CD8-positive, alpha-beta T cell (primary cell): ENCODE measurements at regions of chr3 and their contacts with region 1.

Region 1: DNA sequence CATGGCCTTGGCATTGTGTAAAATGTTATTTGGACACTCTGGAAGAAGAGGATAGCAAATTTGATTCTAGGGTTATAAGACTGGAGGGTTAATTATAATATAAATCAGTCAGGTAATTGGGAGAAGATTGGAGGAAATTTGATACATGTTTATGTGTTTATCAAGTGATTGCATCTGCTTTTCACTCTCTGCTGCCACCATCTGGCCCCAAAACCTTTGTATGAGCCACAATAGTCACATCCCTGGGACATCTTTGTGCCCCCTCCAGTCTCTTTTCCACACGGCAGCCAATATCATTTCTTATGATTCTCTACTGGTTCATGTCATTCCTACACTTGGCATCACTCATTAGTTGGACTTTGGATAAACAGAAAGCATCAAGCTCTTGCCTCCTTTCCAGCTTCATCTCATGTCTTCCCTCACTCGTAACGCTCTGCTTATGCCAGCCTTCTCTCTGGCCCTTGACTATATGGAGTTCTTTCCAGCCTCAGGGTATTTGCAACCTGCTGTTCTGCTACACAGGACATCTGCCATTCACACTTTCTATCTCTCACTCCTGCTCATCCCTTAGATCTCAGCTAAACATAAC is 602.3 kb upstream of the SUCLG2 start:
- DNase-seq: peak in 5 of 9 experiments; percentile 18 to 45 (median 28)
- ATAC-seq: no peak
- H3K4me3 ChIP-seq: no peak overlapping the region
- H3K4me3 Mint-ChIP-seq: no peak overlapping the region
- H3K27ac ChIP-seq: no peak overlapping the region
- H3K27ac Mint-ChIP-seq: no peak overlapping the region
- H3K4me1 ChIP-seq: no peaks in the 10 kb centered on the region
- H3K4me1 Mint-ChIP-seq: peaks cover 4% of the 10 kb centered on the region
- H3K27me3 ChIP-seq: no peaks in the 10 kb centered on the region
- H3K27me3 Mint-ChIP-seq: no peaks in the 10 kb centered on the region
- CTCF ChIP-seq: peak; percentile 34

Region 2: DNA sequence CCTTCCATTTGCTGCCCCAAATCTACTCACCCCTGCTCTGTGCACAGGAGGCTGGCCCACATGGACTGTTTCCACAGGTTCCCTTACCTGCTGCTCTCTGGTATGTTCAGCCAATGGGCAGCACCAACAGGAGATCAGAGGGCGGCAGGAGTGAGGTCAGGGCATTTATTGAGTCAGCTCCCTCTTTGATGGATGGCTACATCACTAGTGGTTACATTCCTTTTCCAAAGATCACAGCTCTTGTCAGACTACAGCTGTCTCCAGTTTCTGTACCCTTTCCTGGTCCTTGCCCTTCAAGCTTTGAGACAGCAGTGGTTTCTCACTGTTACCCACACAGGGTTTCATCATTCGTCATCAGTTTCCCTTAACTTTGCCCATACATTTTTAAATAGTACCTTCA is 927.4 kb before region 1 on chr3:
- CTCF ChIA-PET with region 1: no interaction called
- POLR2A ChIA-PET with region 1: no interaction called
- intact Hi-C with region 1: no loop called
- DNase-seq: no peak
- ATAC-seq: no peak
- H3K4me3 ChIP-seq: no peak overlapping the region
- H3K4me3 Mint-ChIP-seq: no peak overlapping the region
- H3K27ac ChIP-seq: no peak overlapping the region
- H3K27ac Mint-ChIP-seq: no peak overlapping the region
- H3K4me1 ChIP-seq: no peaks in the 10 kb centered on the region
- H3K4me1 Mint-ChIP-seq: no peaks in the 10 kb centered on the region
- H3K27me3 ChIP-seq: no peaks in the 10 kb centered on the region
- H3K27me3 Mint-ChIP-seq: no peaks in the 10 kb centered on the region
- CTCF ChIP-seq: no peak

Region 3: GRCh38 chr3:67384760-67385397 is 871.9 kb before region 1 on chr3:
- CTCF ChIA-PET with region 1: no interaction called
- POLR2A ChIA-PET with region 1: no interaction called
- intact Hi-C with region 1: loop called in 1 of 2 experiments (anchors 5 kb)
- DNase-seq: peak in 7 of 9 experiments; percentile 4 to 54 (median 38)
- ATAC-seq: no peak
- H3K4me3 ChIP-seq: no peak overlapping the region
- H3K4me3 Mint-ChIP-seq: no peak overlapping the region
- H3K27ac ChIP-seq: no peak overlapping the region
- H3K27ac Mint-ChIP-seq: peak overlapping the region; percentile 18
- H3K4me1 ChIP-seq: no peaks in the 10 kb centered on the region
- H3K4me1 Mint-ChIP-seq: peaks cover 12% of the 10 kb centered on the region
- H3K27me3 ChIP-seq: no peaks in the 10 kb centered on the region
- H3K27me3 Mint-ChIP-seq: no peaks in the 10 kb centered on the region
- CTCF ChIP-seq: peak; percentile 45

Region 4: DNA sequence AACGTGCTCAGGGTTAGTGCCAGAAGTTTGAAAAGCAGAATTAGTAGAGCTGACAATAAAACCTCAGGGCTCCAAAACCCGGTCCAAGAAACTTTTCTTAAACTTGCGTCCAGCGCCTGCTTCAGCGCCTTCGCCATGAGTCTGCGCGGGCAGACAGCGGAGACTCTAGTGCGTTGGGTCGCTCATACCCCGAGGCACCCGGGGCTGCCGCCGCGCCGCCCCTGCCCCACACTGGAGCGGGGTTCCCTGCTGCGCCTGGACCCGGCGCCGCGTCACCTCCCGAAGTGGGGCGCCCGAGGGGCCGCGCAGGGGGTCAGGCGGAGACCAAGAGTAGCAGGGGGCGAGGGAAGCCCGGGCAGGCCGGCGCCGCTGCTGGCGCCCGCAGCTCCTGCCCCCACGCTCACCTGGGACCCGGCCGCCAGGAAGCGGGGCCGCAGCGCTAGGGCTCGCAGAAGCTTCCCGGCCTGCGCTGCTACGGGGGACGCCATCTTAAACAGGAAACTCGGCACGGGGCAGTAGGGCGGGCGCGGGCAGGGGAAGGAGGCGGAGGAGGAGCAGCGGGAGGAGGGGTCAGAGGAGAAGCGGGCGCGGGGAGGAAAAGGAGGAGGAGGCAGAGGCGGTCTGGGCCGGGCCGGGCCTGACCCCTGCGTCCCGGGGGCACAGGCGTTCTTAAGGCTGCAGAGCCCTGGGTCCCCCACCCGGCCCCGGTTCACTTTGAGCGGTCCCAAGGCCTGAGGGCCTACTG is 602.5 kb before region 1 on chr3 and contains the start of gene SUCLG2:
- CTCF ChIA-PET with region 1: no interaction called
- POLR2A ChIA-PET with region 1: no interaction called
- intact Hi-C with region 1: no loop called
- DNase-seq: peak; percentile 56 to 89 (median 81)
- ATAC-seq: peak; percentile 66
- H3K4me3 ChIP-seq: peak within 1 kb of the TSS; percentile 78 to 91
- H3K4me3 Mint-ChIP-seq: peak within 1 kb of the TSS; percentile 86
- H3K27ac ChIP-seq: peak within 1 kb of the TSS; percentile 67 to 84
- H3K27ac Mint-ChIP-seq: peak within 1 kb of the TSS; percentile 91
- H3K4me1 ChIP-seq: peaks cover 55% of the 10 kb centered on the region
- H3K4me1 Mint-ChIP-seq: peaks cover 74% of the 10 kb centered on the region
- H3K27me3 ChIP-seq: no peaks in the 10 kb centered on the region
- H3K27me3 Mint-ChIP-seq: no peaks in the 10 kb centered on the region
- CTCF ChIP-seq: no peak
- total RNA-seq, gene SUCLG2: 39.1 to 40.9 TPM

Region 5: DNA sequence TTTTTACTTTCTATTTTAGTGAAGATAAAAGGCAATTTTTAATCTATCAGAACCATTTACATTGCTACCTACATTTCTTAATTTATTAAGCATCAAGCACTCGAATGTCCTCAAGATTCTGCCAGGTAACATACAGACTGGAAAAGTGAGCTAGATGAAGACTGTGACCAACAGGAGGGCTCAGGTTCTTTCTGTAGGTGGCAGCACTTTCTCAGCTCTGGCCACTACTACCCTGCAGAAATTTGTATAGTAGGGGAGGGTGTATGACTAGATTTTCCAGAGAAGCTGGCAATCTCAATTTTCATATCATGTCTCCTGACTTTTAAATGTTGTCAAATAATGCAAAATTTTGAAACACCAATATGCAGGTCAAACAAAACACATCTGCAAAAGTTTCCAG is 437.3 kb before region 1 on chr3:
- CTCF ChIA-PET with region 1: no interaction called
- POLR2A ChIA-PET with region 1: no interaction called
- intact Hi-C with region 1: loop called (anchors 1 to 5 kb)
- DNase-seq: peak in 2 of 9 experiments; percentile 17 to 36
- ATAC-seq: no peak
- H3K4me3 ChIP-seq: no peak overlapping the region
- H3K4me3 Mint-ChIP-seq: no peak overlapping the region
- H3K27ac ChIP-seq: no peak overlapping the region
- H3K27ac Mint-ChIP-seq: no peak overlapping the region
- H3K4me1 ChIP-seq: no peaks in the 10 kb centered on the region
- H3K4me1 Mint-ChIP-seq: no peaks in the 10 kb centered on the region
- H3K27me3 ChIP-seq: no peaks in the 10 kb centered on the region
- H3K27me3 Mint-ChIP-seq: peaks cover 2% of the 10 kb centered on the region
- CTCF ChIP-seq: no peak

Region 6: GRCh38 chr3:67901681-67902080 is 355.0 kb before region 1 on chr3:
- CTCF ChIA-PET with region 1: interaction called, 3 read pairs
- POLR2A ChIA-PET with region 1: no interaction called
- intact Hi-C with region 1: loop called (anchors 1 kb)
- DNase-seq: peak in 3 of 9 experiments; percentile 7 to 45 (median 31)
- ATAC-seq: no peak
- H3K4me3 ChIP-seq: no peak overlapping the region
- H3K4me3 Mint-ChIP-seq: no peak overlapping the region
- H3K27ac ChIP-seq: no peak overlapping the region
- H3K27ac Mint-ChIP-seq: no peak overlapping the region
- H3K4me1 ChIP-seq: peaks cover 10% of the 10 kb centered on the region
- H3K4me1 Mint-ChIP-seq: peaks cover 14% of the 10 kb centered on the region
- H3K27me3 ChIP-seq: no peaks in the 10 kb centered on the region
- H3K27me3 Mint-ChIP-seq: no peaks in the 10 kb centered on the region
- CTCF ChIP-seq: peak; percentile 42